Tibial artery (tissue), 4 donors: ENCODE measurements at regions of chr9 and their contacts with region 1.

Region 1: DNA sequence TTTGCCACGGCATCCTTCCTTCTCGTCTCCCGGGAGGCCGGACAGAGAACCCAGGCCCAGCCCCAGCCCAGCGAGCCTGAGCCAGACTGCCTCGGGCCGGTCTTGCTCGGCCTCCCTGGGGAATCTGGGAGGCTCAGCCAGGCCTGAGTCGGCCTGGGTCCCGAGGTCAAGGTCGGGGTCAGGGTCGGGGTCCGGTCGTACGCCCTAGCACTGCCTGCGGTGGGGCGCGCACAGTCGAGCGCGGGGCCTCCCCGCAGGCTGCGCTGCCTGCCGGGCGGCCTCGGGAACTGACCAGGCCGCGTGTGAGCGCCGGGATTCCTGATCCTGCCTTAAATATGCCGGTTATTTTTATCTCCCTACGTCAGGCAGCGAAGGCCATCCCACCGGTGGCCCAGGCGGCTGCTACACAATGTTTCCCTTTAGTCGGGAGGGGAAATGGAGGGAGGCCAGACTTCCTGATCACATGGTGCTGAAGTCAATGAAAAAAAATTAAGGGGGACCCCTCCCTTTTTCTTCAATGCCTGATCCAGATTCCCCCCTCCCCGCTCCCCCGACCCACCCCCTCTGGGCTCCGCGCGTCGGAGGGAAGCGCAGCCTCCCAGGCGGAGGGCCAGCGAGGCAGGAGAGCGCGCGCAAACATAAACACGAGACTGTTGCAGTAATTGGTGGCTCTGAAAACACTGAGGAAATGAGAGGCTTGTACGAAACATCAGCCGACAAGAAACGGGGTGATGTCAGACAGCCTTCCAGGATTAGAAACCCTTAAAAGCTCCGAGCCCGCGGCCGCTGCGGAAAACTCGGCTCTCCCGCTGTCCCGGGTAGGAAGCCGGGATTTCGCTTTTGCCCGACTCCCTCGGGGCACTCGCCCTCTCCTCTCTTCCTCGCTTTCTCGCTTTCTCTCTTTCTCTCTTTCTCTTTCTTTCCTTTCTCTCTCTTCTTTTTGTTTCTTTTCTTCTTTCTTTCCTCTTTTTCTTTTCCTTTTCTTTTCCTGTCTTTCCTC is 148.2 kb upstream of the KLF4 start:
- DNase-seq: peak; percentile 97 to 98
- H3K4me3 ChIP-seq: peak overlapping the region; percentile 46 to 53
- H3K27ac ChIP-seq: peak overlapping the region; percentile 96 to 99
- H3K4me1 ChIP-seq: peaks cover 0 to 27% (median 12%) of the 10 kb centered on the region in 4 donors
- H3K27me3 ChIP-seq: no peaks in the 10 kb centered on the region
- CTCF ChIP-seq: peak; percentile 39 to 51

Region 2: GRCh38 chr9:107496976-107497375 is 140.7 kb before region 1 on chr9:
- intact Hi-C with region 1: no loop called
- DNase-seq: no peak
- H3K4me3 ChIP-seq: no peak overlapping the region
- H3K27ac ChIP-seq: no peak overlapping the region
- H3K4me1 ChIP-seq: no peaks in the 10 kb centered on the region
- H3K27me3 ChIP-seq: no peaks in the 10 kb centered on the region
- CTCF ChIP-seq: no peak

Region 3: GRCh38 chr9:107732781-107733522 is 95.2 kb after region 1 on chr9:
- intact Hi-C with region 1: loop called (anchors 5 kb)
- DNase-seq: peak; percentile 80
- H3K4me3 ChIP-seq: peak overlapping the region; percentile 28 to 42
- H3K27ac ChIP-seq: peak overlapping the region; percentile 82 to 85
- H3K4me1 ChIP-seq: peaks cover 0 to 44% (median 27%) of the 10 kb centered on the region in 4 donors
- H3K27me3 ChIP-seq: no peaks in the 10 kb centered on the region
- CTCF ChIP-seq: no peak